ENCODE measurements at regions of chr20 and their contacts with region 1.

Region 1: GRCh38 chr20:51595058-51595532 is 52.6 kb upstream of the NFATC2 start:
- DNase-seq: peak; percentile 89
- ATAC-seq: peak; percentile 93
- H3K4me3 Mint-ChIP-seq: no peak overlapping the region
- H3K27ac Mint-ChIP-seq: peak overlapping the region; percentile 72
- H3K4me1 Mint-ChIP-seq: peaks cover 54% of the 10 kb centered on the region
- H3K27me3 Mint-ChIP-seq: no peaks in the 10 kb centered on the region

Region 2: GRCh38 chr20:51220293-51220706 is 374.8 kb before region 1 on chr20:
- CTCF ChIA-PET with region 1: no interaction called
- POLR2A ChIA-PET with region 1: no interaction called
- intact Hi-C with region 1: loop called in 1 of 2 experiments (anchors 10 kb)
- DNase-seq: peak; percentile 83
- ATAC-seq: peak; percentile 87
- H3K4me3 Mint-ChIP-seq: no peak overlapping the region
- H3K27ac Mint-ChIP-seq: no peak overlapping the region
- H3K4me1 Mint-ChIP-seq: peaks cover 10% of the 10 kb centered on the region
- H3K27me3 Mint-ChIP-seq: peaks cover 58% of the 10 kb centered on the region

Region 3: DNA sequence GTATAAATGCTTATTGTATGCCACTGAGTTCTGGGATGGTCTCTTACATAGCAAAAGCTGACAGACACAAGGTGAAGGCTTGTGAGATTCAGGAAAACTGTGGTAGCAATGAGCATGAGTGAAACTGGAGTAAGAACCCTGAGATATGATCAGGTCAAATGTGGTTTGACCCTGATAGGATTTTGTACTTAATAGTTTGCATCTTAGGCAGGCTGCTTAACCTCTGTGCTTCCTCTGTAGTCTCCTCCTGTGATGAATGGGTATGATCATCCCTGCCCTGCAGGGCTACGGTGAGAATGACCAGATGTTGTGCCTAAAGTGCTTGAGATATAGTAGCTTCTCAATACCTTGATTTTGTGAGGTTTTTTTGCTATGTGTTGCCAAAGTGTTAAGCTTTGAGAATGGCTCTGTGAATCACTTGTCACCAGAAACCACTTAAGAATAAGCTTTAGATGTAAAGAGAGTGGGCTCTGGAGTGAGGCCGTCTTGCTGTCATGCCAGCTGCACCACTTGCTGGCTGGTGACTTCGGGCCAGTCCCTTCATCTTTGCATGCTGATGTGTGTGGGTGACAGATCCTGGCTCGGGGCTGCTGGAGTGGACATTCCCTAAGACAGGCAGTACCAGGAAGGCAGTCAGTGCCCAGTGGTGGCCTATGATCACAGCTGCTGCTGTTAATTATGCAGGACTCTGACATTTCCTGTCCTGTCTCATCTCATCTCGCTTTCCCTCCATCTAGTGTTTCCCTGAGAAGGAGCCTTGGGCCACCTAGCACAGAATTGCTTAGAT is 307.3 kb before region 1 on chr20:
- CTCF ChIA-PET with region 1: no interaction called
- POLR2A ChIA-PET with region 1: no interaction called
- intact Hi-C with region 1: no loop called
- DNase-seq: no peak
- ATAC-seq: no peak
- H3K4me3 Mint-ChIP-seq: no peak overlapping the region
- H3K27ac Mint-ChIP-seq: no peak overlapping the region
- H3K4me1 Mint-ChIP-seq: no peaks in the 10 kb centered on the region
- H3K27me3 Mint-ChIP-seq: peaks cover 10% of the 10 kb centered on the region

Region 4: DNA sequence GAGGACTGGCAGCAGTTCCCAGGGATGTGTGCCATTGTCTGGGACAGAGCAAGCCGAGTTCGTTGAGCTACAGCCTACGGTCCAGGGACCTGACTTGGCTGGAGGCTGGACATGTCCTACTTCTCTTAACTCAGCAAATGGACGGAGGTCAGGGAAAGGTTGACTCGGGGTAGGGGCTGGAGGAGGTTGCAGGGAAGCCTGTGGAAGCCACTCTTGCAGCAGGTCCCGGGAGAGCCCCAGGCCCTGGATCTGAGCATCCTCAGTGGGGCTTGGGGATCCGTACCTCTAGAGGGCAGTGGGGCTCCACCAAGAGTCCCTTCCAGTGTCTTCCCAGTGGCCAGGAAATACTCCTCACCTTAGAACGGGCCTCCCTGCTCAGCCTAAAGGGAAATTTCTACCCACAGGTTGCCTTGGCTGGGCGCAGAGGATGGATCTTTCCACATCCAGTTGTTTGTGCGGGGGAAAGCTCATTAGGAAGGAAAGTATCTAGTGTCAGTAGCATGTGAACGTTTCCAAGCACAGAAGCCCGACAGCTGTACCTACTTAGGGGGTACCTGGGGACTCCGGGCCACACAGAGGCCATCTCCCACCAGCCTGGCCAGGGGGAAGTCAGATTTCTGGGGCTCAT is 222.8 kb before region 1 on chr20:
- CTCF ChIA-PET with region 1: interaction called, 15 read pairs
- POLR2A ChIA-PET with region 1: no interaction called
- intact Hi-C with region 1: loop called (anchors 1 to 2 kb)
- DNase-seq: peak; percentile 79
- ATAC-seq: peak; percentile 94
- H3K4me3 Mint-ChIP-seq: no peak overlapping the region
- H3K27ac Mint-ChIP-seq: no peak overlapping the region
- H3K4me1 Mint-ChIP-seq: no peaks in the 10 kb centered on the region
- H3K27me3 Mint-ChIP-seq: no peaks in the 10 kb centered on the region

Region 5: DNA sequence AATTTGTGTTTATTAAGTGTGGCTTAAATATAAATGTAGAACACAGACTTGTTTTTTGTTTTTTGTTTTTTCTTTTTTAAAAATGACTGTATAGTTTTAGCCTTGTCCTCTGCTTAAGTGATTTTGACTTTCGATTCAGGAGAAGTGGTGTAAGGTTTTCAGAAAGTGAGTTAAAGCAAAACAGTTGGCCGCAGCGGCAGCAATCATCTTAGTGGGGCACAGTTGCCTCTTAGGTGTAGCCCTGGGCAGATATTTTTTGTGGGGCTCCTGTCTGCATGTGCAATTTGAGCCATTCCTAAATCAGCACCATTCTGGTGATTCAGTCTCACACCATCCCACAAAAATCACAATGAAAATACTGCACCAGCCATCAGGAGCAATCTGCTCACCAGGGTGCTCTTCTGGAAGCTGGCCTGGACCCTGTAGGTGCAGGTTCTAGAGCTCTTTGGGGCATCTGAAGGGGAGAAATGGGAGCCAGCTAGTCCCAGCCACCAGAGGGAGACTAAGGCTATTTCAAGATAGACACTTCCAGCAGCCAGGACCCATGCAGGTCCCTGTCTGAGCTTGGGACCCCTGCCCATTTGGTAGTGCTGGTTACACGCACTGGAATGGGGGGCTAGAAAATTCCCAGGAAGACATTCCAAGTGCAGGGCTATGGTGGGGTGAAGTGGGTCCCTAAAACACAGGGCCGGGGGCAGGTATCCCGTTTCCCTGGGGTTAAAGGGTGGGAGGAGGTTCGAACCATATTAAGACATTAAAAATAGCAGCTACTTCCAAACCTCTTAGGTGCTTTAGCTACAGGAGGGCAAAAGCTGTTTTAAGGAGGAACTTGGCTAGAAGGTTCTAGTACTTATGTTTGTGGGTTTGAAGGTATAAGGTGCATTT is 209.2 kb before region 1 on chr20:
- CTCF ChIA-PET with region 1: interaction called, 31 read pairs
- POLR2A ChIA-PET with region 1: no interaction called
- intact Hi-C with region 1: loop called (anchors 1 to 5 kb)
- DNase-seq: peak; percentile 48
- ATAC-seq: no peak
- H3K4me3 Mint-ChIP-seq: no peak overlapping the region
- H3K27ac Mint-ChIP-seq: no peak overlapping the region
- H3K4me1 Mint-ChIP-seq: peaks cover 64% of the 10 kb centered on the region
- H3K27me3 Mint-ChIP-seq: no peaks in the 10 kb centered on the region

Region 6: DNA sequence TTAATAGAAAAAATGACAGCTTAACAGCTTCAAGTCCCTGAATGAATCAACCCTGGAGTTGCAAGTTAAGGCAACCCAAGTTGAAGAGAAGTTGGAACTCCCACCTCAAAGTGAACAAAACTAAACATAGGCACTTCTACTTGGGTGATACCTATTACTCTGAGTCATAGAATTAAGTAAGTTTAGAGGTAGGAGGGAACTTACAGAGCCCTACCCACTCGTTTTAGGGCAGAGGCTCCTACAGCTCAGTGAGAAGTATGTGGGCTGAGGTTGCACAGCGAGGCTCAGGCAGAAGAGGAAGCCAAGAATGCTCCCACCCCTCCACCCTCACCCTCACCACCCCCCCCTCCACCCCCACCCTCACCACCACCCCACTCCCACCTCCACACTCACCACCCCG is 94.8 kb before region 1 on chr20:
- CTCF ChIA-PET with region 1: interaction called, 7 read pairs
- POLR2A ChIA-PET with region 1: no interaction called
- intact Hi-C with region 1: loop called in 1 of 2 experiments (anchors 1 kb)
- DNase-seq: peak; percentile 74
- ATAC-seq: peak; percentile 72
- H3K4me3 Mint-ChIP-seq: no peak overlapping the region
- H3K27ac Mint-ChIP-seq: peak overlapping the region; percentile 91
- H3K4me1 Mint-ChIP-seq: peaks cover 82% of the 10 kb centered on the region
- H3K27me3 Mint-ChIP-seq: no peaks in the 10 kb centered on the region

Region 7: DNA sequence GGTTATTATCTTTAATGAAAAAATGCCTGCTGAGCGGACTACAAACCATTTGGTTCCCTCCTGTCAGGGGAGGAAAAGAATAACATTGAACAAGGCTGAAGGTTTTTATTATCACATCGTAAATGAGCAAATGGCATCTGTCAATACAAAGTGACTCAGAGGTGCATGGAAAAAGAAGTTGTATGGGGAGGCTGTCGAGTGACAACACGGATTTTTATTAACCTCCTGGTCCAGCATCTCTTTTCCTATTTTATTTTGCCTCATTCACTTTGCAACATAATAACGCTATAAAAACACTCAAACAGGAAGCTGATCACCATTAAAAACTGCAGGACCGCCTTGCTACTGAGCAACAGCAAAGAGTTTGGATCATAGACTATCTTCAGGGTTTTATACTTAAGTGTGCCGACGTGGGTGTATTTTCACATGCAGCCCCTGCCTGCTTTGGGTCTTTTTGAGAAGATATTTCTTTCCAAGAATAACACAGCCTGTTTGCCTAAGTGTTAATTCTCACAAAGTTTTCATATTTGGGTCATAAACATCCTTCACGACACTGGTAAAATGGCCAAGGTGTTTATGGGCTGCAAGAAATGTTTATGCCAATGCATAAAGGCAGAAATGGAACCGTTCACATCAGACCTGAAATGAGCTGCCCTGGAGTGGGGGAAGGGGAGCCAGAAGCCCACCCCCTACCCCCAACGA is 339.4 kb after region 1 on chr20:
- CTCF ChIA-PET with region 1: no interaction called
- POLR2A ChIA-PET with region 1: no interaction called
- intact Hi-C with region 1: no loop called
- DNase-seq: no peak
- ATAC-seq: no peak
- H3K4me3 Mint-ChIP-seq: no peak overlapping the region
- H3K27ac Mint-ChIP-seq: no peak overlapping the region
- H3K4me1 Mint-ChIP-seq: no peaks in the 10 kb centered on the region
- H3K27me3 Mint-ChIP-seq: peaks cover 2% of the 10 kb centered on the region

Region 8: GRCh38 chr20:52305858-52306257 is 710.8 kb after region 1 on chr20:
- CTCF ChIA-PET with region 1: no interaction called
- POLR2A ChIA-PET with region 1: no interaction called
- intact Hi-C with region 1: no loop called
- DNase-seq: peak; percentile 49
- ATAC-seq: peak; percentile 87
- H3K4me3 Mint-ChIP-seq: no peak overlapping the region
- H3K27ac Mint-ChIP-seq: peak overlapping the region; percentile 45
- H3K4me1 Mint-ChIP-seq: peaks cover 56% of the 10 kb centered on the region
- H3K27me3 Mint-ChIP-seq: no peaks in the 10 kb centered on the region

Measured in activated CD4-positive, alpha-beta T cell treated with anti-CD3 and anti-CD28 coated beads for 36 hours (primary cell).